ENCODE measurements at regions of chr7 and their contacts with region 1.

Region 1: GRCh38 chr7:50467817-50468610 is 17.9 kb upstream of the FIGNL1 start:
- DNase-seq: peak; percentile 79
- ATAC-seq: peak; percentile 94
- H3K4me3 ChIP-seq: peak overlapping the region in 3 of 5 experiments; percentile 7 to 56 (median 34)
- H3K4me3 Mint-ChIP-seq: peak overlapping the region; percentile 54
- H3K27ac ChIP-seq: no peak overlapping the region
- H3K27ac Mint-ChIP-seq: no peak overlapping the region
- H3K4me1 ChIP-seq: peaks cover 9 to 10% of the 10 kb centered on the region in 2 donors
- H3K4me1 Mint-ChIP-seq: peaks cover 9% of the 10 kb centered on the region
- H3K27me3 ChIP-seq: no peaks in the 10 kb centered on the region
- H3K27me3 Mint-ChIP-seq: peaks cover 5% of the 10 kb centered on the region
- CTCF ChIP-seq: peak; percentile 81

Region 2: DNA sequence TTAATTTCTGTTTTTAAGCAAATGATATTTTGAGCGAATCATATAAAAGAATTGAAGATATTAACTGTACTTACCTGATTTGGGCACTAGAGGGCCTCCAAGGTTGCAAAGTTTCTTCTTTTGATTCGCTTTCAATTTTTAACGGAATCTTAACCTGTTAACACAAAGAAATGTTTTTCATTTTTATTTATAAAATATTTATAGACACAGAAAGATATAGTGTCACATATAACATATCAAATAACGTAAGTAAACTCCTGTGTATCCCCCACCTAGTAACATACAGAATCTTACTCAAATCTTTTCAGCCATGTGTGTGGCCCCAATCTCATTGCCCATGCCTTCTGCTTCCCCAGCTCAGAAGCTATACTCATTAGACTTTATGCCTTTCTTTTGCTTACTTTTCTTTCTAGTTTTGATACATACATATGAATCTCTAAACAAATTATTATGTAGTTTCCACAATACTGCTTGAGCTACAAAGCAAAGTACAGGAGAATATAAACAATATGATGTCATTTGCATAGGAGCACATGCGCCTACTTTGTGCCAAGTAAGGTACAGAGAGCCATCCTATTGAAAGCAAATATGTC is 325.5 kb before region 1 on chr7:
- CTCF ChIA-PET with region 1: interaction called, 4 read pairs
- POLR2A ChIA-PET with region 1: no interaction called
- intact Hi-C with region 1: loop called (anchors 2 kb)
- DNase-seq: peak; percentile 71
- ATAC-seq: peak; percentile 71
- H3K4me3 ChIP-seq: peak overlapping the region in 4 of 5 experiments; percentile 8 to 33 (median 30)
- H3K4me3 Mint-ChIP-seq: peak overlapping the region; percentile 80
- H3K27ac ChIP-seq: peak overlapping the region in 1 of 2 donors; percentile 62
- H3K27ac Mint-ChIP-seq: peak overlapping the region; percentile 62
- H3K4me1 ChIP-seq: peaks cover 42 to 50% of the 10 kb centered on the region in 2 donors
- H3K4me1 Mint-ChIP-seq: peaks cover 49% of the 10 kb centered on the region
- H3K27me3 ChIP-seq: no peaks in the 10 kb centered on the region
- H3K27me3 Mint-ChIP-seq: no peaks in the 10 kb centered on the region
- CTCF ChIP-seq: peak; percentile 94

Region 3: GRCh38 chr7:50197549-50197948 is 270.5 kb before region 1 on chr7:
- CTCF ChIA-PET with region 1: no interaction called
- POLR2A ChIA-PET with region 1: no interaction called
- intact Hi-C with region 1: no loop called
- DNase-seq: no peak
- ATAC-seq: peak; percentile 74
- H3K4me3 ChIP-seq: no peak overlapping the region
- H3K4me3 Mint-ChIP-seq: no peak overlapping the region
- H3K27ac ChIP-seq: no peak overlapping the region
- H3K27ac Mint-ChIP-seq: peak overlapping the region; percentile 54
- H3K4me1 ChIP-seq: peaks cover 0 to 4% of the 10 kb centered on the region in 2 donors
- H3K4me1 Mint-ChIP-seq: peaks cover 9% of the 10 kb centered on the region
- H3K27me3 ChIP-seq: no peaks in the 10 kb centered on the region
- H3K27me3 Mint-ChIP-seq: no peaks in the 10 kb centered on the region
- CTCF ChIP-seq: no peak

Region 4: DNA sequence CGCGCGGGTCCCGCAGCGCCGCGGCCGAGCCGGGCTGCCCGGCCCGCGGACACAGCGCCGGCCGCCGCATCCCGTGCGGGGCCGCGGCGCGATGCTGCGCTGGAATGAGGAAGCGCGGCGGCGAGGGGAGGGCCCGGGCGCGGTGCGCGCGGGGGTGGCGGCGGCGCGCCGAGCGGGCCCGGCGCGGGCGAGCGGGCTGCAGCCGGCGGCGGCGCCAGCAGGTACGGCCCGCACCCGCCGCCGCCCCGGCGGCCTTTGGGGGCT is 164.2 kb before region 1 on chr7:
- CTCF ChIA-PET with region 1: no interaction called
- POLR2A ChIA-PET with region 1: no interaction called
- intact Hi-C with region 1: no loop called
- DNase-seq: no peak
- ATAC-seq: peak; percentile 37
- H3K4me3 ChIP-seq: peak overlapping the region in 4 of 5 experiments; percentile 74 to 97 (median 86)
- H3K4me3 Mint-ChIP-seq: no peak overlapping the region
- H3K27ac ChIP-seq: no peak overlapping the region
- H3K27ac Mint-ChIP-seq: no peak overlapping the region
- H3K4me1 ChIP-seq: peaks cover 13 to 27% of the 10 kb centered on the region in 2 donors
- H3K4me1 Mint-ChIP-seq: peaks cover 31% of the 10 kb centered on the region
- H3K27me3 ChIP-seq: no peaks in the 10 kb centered on the region
- H3K27me3 Mint-ChIP-seq: no peaks in the 10 kb centered on the region
- CTCF ChIP-seq: no peak